ENCODE measurements at regions of chr3 and their contacts with region 1.

Region 1: DNA sequence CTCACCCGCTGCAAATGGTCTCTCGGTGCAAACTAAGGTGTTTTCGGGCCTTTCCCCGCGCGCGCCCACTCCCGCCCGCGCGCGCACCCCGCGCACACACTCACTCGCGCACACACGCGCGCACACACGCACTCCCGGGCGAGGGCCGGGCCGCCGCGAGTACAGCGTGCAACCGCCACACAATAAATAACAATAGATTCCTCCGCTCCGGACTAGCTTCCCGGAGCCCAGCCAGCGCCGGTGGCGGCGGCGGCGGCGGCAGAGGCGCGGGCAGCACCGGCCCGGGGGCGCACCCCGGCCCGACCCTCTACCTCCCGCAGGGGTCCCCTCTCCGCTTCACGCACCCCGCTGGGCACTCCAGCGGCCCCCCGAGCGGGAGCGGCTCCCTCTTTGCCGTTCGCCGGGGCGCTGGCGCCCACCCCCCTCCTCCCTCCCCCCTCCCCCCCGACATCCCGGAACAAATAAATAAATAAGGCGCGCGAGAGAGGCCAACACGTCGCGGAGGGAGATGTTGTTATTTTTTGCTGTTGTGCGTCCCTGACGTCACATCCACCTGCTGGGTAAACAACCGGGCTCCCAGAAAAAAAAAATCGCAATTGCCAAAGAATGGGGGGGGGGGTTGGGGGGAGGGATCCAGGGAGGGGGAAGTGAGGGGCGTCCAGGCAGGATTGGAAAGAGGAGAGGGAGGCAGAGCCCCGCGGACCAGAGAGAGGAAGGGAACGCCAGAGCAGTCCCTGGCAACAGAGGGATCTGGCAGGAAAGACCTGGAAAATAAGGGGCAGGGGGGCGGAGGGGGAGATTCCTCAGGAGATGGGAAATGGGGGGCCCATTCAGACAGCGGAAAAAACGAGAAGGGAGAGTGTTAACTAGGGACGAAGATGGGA is at the start of gene FOXP1:
- DNase-seq: peak; percentile 81
- H3K4me3 ChIP-seq: peak within 1 kb of the TSS; percentile 90
- H3K27ac ChIP-seq: peak within 1 kb of the TSS; percentile 88
- H3K4me1 ChIP-seq: peaks cover 35% of the 10 kb centered on the region
- CTCF ChIP-seq: no peak
- total RNA-seq, gene FOXP1: 67.2 and 87.3 TPM in 2 replicates

Region 2: DNA sequence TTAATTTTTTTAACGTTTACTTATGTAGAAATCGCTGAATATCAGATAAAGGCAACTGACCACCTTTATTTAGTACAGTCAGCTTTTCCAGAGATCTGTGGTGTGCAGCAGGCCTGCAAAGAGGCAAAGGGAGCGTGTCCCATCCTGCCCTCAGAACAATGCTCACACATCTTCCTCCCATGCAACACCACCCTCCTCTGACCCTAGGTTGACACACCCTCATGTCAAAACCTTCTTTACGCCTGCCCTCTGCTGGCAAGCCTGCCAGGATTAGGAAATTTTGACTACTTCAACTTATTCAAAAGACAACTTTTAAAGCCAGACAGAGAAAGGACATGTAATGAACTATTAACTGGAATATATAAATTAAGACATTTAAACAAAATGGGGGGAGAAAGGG is 514.0 kb before region 1 on chr3:
- CTCF ChIA-PET with region 1: no interaction called
- POLR2A ChIA-PET with region 1: no interaction called
- intact Hi-C with region 1: loop called (anchors 1 kb)
- DNase-seq: peak; percentile 76
- H3K4me3 ChIP-seq: no peak overlapping the region
- H3K27ac ChIP-seq: no peak overlapping the region
- H3K4me1 ChIP-seq: peaks cover 47% of the 10 kb centered on the region
- CTCF ChIP-seq: peak; percentile 88

Region 3: DNA sequence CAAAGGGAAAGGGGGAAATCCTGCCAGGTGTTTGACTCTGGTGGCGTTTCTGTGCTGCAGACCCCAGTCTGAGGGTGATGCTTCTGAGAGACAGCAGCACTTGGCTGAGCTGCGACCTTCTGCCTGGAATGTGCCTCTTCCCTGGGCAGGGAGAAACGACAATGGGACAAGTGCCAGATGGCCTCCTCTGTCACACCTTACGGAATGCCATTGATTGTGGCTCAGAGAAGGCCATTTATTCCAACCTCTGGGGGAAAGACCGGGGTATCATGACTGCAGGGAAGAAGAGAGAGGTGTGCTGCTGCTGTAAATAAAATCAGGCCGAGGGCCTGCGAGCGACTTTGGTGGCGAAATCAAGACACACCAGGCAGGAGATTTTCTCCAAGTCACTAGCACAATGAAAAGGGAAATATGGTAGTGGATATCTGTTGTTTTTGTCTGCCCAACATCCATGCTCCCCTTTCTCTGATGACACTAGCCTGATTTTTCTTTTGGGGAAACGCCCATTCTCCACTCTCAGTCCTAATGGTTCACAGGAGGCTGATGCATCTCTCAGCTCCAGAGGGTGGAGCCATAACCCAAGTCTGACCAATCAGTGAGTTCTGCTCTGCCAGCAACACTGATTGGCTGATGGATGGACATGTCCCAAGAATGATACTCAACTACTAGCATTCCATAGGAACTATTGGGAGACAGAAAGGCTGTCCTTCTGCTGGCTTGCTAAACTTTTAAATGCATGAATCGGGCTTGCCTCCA is 336.4 kb before region 1 on chr3:
- CTCF ChIA-PET with region 1: no interaction called
- POLR2A ChIA-PET with region 1: no interaction called
- intact Hi-C with region 1: loop called (anchors 5 kb)
- DNase-seq: peak; percentile 33
- H3K4me3 ChIP-seq: no peak overlapping the region
- H3K27ac ChIP-seq: no peak overlapping the region
- H3K4me1 ChIP-seq: no peaks in the 10 kb centered on the region
- CTCF ChIP-seq: peak; percentile 29; the same call in 1 of the 2 replicates

Region 4: GRCh38 chr3:71444028-71444860 is 139.6 kb before region 1 on chr3:
- CTCF ChIA-PET with region 1: interaction called, 6 read pairs
- POLR2A ChIA-PET with region 1: interaction called, 6 read pairs
- intact Hi-C with region 1: loop called (anchors 1 kb)
- DNase-seq: peak; percentile 94
- H3K4me3 ChIP-seq: peak overlapping the region; percentile 61
- H3K27ac ChIP-seq: peak overlapping the region; percentile 99
- H3K4me1 ChIP-seq: peaks cover 98% of the 10 kb centered on the region
- CTCF ChIP-seq: no peak

Region 5: DNA sequence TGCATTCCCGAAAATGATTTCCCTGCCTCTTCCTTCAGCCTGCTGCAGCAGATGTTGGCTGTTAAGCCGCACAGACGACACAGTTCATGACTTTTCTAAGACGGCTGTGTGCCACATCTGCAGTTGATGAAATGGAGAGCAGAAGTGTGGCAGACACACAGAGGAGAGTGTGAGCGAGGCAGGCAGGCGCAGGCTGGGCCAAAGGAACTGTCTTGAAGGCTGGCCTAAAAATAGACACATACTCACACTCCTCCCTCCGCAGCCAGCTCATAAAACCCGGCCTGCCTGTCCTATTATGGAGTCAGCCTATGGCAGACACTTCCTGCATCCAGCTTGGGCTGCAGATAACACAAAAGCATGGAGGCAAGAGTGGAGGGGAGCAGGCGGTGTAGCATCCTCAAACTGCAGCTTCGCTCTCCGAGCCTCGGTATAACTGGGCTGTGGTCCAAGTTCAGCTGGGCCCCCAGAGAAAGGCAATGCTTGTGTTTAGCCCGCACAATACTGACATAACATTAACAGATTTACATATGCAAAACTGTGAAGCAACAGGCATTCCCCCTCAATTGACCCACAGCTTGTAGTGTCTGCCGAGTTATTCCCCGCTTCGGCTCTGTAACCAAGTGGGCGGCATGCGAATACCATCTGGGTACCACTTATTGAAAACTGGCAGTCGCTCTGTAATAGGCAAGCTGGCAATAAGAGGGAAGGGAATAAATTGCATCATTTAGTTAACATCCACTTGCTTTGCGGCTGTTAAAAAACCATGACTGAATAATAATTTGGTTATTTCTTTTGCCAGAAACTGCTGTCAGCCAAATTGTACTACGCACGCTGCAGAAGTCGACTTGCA is 41.1 kb before region 1 on chr3:
- CTCF ChIA-PET with region 1: interaction called, 3 read pairs
- POLR2A ChIA-PET with region 1: interaction called, 10 read pairs
- intact Hi-C with region 1: loop called (anchors 1 kb)
- DNase-seq: peak; percentile 90
- H3K4me3 ChIP-seq: peak overlapping the region; percentile 56
- H3K27ac ChIP-seq: peak overlapping the region; percentile 85
- H3K4me1 ChIP-seq: peaks cover 80% of the 10 kb centered on the region
- CTCF ChIP-seq: no peak

Measured in OCI-LY7 (cell line).